Adrenal gland (tissue), 19 donors: ENCODE measurements at regions of chr11 and their contacts with region 1.

Region 1: GRCh38 chr11:118401151-118401878 is at the start of gene ATP5MG:
- DNase-seq: peak; percentile 90 to 96 (median 93)
- H3K4me3 ChIP-seq: peak within 1 kb of the TSS; percentile 36 to 86 (median 66)
- H3K27ac ChIP-seq: peak within 1 kb of the TSS; percentile 78 to 95 (median 90)
- H3K4me1 ChIP-seq: peaks cover 15 to 41% of the 10 kb centered on the region in 2 donors
- H3K27me3 ChIP-seq: no peaks in the 10 kb centered on the region
- CTCF ChIP-seq: peak in 2 of 6 experiments; percentile 2 to 24
- POLR2A ChIP-seq: peak; percentile 7 to 78
- total RNA-seq, gene ATP5MG: 51.8 to 857 (median 300) TPM

Region 2: GRCh38 chr11:118435893-118436624 is 34.7 kb after region 1 on chr11 and contains the start of gene KMT2A:
- intact Hi-C with region 1: loop called in 1 of 2 experiments (anchors 5 kb)
- DNase-seq: peak; percentile 97 to 100 (median 98)
- H3K4me3 ChIP-seq: peak within 1 kb of the TSS; percentile 62 to 89 (median 71)
- H3K27ac ChIP-seq: peak within 1 kb of the TSS; percentile 70 to 98 (median 83)
- H3K4me1 ChIP-seq: peaks cover 25 to 27% of the 10 kb centered on the region in 2 donors
- H3K27me3 ChIP-seq: no peaks in the 10 kb centered on the region
- CTCF ChIP-seq: peak in 4 of 6 experiments; percentile 72 to 100 (median 92)
- POLR2A ChIP-seq: peak; percentile 11 to 54
- total RNA-seq, gene KMT2A: 34.9 to 107 (median 48.8) TPM

Region 3: DNA sequence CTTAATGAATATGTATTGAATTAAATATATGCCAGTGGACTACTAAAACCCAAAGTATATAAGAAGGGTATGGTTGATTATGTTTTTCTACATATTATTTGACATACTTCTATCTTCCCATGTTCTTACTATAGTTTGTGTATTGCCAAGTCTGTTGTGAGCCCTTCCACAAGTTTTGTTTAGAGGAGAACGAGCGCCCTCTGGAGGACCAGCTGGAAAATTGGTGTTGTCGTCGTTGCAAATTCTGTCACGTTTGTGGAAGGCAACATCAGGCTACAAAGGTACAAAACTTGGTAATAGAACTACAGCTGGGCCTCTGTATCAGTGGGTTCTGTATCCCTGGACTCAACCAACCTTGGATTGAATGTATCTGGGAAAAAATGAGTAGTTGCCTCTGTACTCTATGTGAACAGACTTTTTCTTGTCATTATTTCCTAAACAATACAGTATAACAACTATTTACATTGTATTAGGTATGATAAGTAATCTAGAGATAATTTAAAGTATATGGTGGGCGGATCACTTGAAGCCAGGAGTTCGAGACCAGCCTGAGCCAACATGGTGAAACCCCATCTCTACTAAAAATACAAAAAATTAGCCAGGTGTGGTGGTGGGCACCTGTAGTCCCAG is 87.3 kb after region 1 on chr11:
- intact Hi-C with region 1: loop called (anchors 5 to 10 kb)
- DNase-seq: peak; percentile 55 to 76 (median 66)
- H3K4me3 ChIP-seq: no peak overlapping the region
- H3K27ac ChIP-seq: no peak overlapping the region
- H3K4me1 ChIP-seq: no peaks in the 10 kb centered on the region
- H3K27me3 ChIP-seq: no peaks in the 10 kb centered on the region
- CTCF ChIP-seq: peak; percentile 73 to 82 (median 80)
- POLR2A ChIP-seq: no peak